Activated B cell treated with CpG ODN at 0.5 μM for 24 hours (primary cell): ENCODE measurements at regions of chr10 and their contacts with region 1.

Region 1: DNA sequence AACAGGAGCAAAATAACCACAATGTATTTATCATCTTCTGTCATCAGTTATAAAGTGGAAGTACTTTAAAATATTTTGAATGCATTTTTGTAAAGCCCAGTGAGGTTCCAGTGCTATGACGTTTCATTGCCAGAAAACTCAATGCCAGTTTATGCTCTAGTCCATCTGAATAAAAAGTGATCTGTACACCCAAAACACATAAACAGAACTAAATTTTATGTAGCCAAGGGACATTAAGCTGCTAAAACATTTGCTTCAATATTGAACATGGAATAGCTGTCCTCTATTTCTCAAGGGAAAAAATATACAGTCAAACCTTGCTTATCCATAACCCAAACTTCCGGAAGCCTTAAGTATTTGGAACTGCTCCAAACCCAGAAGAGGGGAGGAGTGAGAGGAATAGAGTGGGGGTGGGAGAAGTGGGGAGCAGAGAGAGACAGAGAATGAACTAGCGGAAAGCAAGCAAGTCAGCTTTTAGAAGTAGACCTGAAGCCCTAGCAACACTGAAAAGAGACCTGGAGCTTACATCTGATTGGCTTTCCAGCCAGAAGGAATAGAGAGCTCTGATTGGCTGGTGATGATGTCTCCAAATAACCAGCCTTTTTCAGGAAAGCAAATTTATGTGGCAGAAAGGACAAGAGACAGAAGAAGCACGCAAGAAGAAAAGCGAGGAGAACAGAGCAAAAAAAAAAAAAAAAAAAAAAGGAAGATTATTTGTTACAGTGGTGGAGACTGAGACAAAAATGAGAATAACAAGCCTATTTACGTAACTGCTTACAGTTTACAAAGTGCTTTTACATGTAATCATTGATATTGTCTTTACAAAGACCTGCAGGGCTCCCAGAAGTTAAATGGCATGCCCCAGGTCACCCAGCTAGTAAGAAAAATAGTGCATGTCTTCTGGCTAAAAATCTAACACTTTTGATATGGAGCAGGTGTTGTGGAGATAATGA is 196.0 kb downstream of the RNLS start:
- DNase-seq: no peak
- ATAC-seq: peak; percentile 50
- H3K4me3 Mint-ChIP-seq: no peak overlapping the region
- H3K27ac Mint-ChIP-seq: no peak overlapping the region
- H3K4me1 Mint-ChIP-seq: peaks cover 32% of the 10 kb centered on the region
- H3K27me3 Mint-ChIP-seq: no peaks in the 10 kb centered on the region
- CTCF ChIP-seq: no peak

Region 2: GRCh38 chr10:86971232-86971991 is 1415.7 kb before region 1 on chr10:
- CTCF ChIA-PET with region 1: no interaction called
- POLR2A ChIA-PET with region 1: no interaction called
- intact Hi-C with region 1: loop called (anchors 5 kb)
- DNase-seq: peak; percentile 91
- ATAC-seq: peak; percentile 88
- H3K4me3 Mint-ChIP-seq: peak overlapping the region; percentile 87
- H3K27ac Mint-ChIP-seq: peak overlapping the region; percentile 86
- H3K4me1 Mint-ChIP-seq: peaks cover 26% of the 10 kb centered on the region
- H3K27me3 Mint-ChIP-seq: peaks cover 4% of the 10 kb centered on the region
- CTCF ChIP-seq: no peak

Region 3: GRCh38 chr10:87850742-87851205 is 536.3 kb before region 1 on chr10:
- CTCF ChIA-PET with region 1: interaction called, 28 read pairs
- POLR2A ChIA-PET with region 1: no interaction called
- intact Hi-C with region 1: no loop called
- DNase-seq: no peak
- ATAC-seq: peak; percentile 77
- H3K4me3 Mint-ChIP-seq: no peak overlapping the region
- H3K27ac Mint-ChIP-seq: no peak overlapping the region
- H3K4me1 Mint-ChIP-seq: peaks cover 5% of the 10 kb centered on the region
- H3K27me3 Mint-ChIP-seq: no peaks in the 10 kb centered on the region
- CTCF ChIP-seq: no peak

Region 4: DNA sequence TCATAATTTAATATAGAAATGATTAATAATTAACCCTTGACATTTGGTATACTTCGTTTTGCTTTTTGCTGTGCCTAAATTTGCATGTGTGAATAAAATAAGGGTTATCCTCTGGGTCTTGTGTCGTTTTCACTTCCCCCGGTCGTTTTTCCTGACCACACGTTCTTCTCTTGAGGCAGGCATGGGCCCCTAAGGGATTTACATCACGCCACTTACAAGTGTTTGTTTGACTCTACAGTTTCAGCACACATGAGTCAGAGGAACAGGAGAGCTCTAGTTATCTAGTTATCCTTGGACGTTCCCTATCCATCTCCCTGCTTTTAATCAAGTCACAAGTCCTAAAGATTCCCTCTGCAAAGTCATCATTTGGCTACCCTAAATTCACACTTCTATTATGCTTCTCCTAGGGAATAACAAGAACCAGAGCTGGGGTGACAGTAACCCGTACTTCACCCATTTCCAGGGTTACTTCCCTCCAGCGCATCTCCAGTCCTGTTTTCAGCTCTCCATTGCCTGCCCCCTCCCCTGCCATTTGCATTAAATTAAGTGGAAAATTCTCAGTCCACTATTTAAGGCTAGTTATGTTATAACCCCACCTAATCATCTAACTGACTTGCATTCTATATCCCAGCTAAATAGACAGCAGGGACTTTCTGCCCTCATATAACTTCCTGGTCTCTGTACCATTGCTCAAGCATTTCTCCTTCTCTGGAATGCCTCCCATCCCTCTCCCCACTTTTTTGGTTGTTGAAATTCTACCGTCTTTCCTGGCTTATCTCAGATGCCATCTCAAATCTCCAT is 316.8 kb before region 1 on chr10:
- CTCF ChIA-PET with region 1: interaction called, 4 read pairs
- POLR2A ChIA-PET with region 1: interaction called, 10 read pairs
- intact Hi-C with region 1: loop called (anchors 2 kb)
- DNase-seq: no peak
- ATAC-seq: peak; percentile 81
- H3K4me3 Mint-ChIP-seq: peak overlapping the region; percentile 69
- H3K27ac Mint-ChIP-seq: peak overlapping the region; percentile 91
- H3K4me1 Mint-ChIP-seq: peaks cover 84% of the 10 kb centered on the region
- H3K27me3 Mint-ChIP-seq: no peaks in the 10 kb centered on the region
- CTCF ChIP-seq: no peak

Region 5: DNA sequence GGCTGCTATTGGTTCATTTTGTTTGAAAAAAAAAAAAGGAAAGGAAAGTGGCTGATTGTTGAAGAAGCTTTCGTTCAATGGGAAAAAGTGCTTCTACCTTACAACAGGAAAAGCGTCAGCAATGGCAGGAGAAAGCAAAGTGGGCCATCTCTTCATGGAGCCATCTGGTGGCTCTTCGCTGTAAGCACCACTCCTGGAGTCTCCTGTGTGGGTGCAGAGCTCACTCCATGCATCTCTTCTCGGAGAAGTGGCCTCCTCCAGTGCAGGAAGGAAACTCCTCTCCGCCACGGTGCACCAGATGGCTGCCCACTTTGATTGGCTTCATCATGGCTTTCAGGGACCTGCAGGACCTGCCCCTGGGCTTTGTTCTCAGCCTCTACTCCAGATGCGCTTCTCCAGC is 272.7 kb before region 1 on chr10:
- CTCF ChIA-PET with region 1: interaction called, 47 read pairs
- POLR2A ChIA-PET with region 1: interaction called, 7 read pairs
- intact Hi-C with region 1: no loop called
- DNase-seq: no peak
- ATAC-seq: peak; percentile 40
- H3K4me3 Mint-ChIP-seq: peak overlapping the region; percentile 66
- H3K27ac Mint-ChIP-seq: no peak overlapping the region
- H3K4me1 Mint-ChIP-seq: peaks cover 2% of the 10 kb centered on the region
- H3K27me3 Mint-ChIP-seq: no peaks in the 10 kb centered on the region
- CTCF ChIP-seq: no peak

Region 6: DNA sequence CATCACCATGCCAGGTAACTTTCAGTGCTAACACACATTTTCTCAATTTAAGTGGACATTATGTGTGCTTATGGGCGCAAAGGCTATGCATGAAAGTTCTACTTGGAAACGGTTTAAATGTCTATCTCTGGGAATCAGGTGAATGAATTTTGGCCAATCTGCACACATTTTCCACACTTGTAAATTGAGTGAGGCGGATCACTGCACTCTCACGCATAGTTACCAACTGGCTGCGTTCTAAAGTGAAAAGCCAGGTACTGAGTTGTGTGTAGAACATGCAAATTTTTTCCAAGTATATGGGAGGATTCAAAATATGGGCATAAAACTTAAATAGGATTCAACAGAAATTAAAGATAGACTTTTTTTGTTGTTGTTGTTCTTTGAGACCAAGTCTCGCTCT is 127.7 kb before region 1 on chr10:
- CTCF ChIA-PET with region 1: no interaction called
- POLR2A ChIA-PET with region 1: no interaction called
- intact Hi-C with region 1: no loop called
- DNase-seq: no peak
- ATAC-seq: no peak
- H3K4me3 Mint-ChIP-seq: no peak overlapping the region
- H3K27ac Mint-ChIP-seq: no peak overlapping the region
- H3K4me1 Mint-ChIP-seq: peaks cover 3% of the 10 kb centered on the region
- H3K27me3 Mint-ChIP-seq: no peaks in the 10 kb centered on the region
- CTCF ChIP-seq: no peak

Region 7: GRCh38 chr10:88330174-88330573 is 56.9 kb before region 1 on chr10:
- CTCF ChIA-PET with region 1: interaction called, 4 read pairs
- POLR2A ChIA-PET with region 1: interaction called, 19 read pairs
- intact Hi-C with region 1: loop called (anchors 2 kb)
- DNase-seq: no peak
- ATAC-seq: no peak
- H3K4me3 Mint-ChIP-seq: no peak overlapping the region
- H3K27ac Mint-ChIP-seq: no peak overlapping the region
- H3K4me1 Mint-ChIP-seq: peaks cover 45% of the 10 kb centered on the region
- H3K27me3 Mint-ChIP-seq: no peaks in the 10 kb centered on the region
- CTCF ChIP-seq: no peak

Region 8: GRCh38 chr10:88428442-88428841 is 41.3 kb after region 1 on chr10:
- CTCF ChIA-PET with region 1: no interaction called
- POLR2A ChIA-PET with region 1: no interaction called
- intact Hi-C with region 1: no loop called
- DNase-seq: no peak
- ATAC-seq: no peak
- H3K4me3 Mint-ChIP-seq: no peak overlapping the region
- H3K27ac Mint-ChIP-seq: no peak overlapping the region
- H3K4me1 Mint-ChIP-seq: no peaks in the 10 kb centered on the region
- H3K27me3 Mint-ChIP-seq: no peaks in the 10 kb centered on the region
- CTCF ChIP-seq: no peak